HAP-1 (cell line): ENCODE measurements at regions of chr17 and their contacts with region 1.

Region 1: GRCh38 chr17:20300436-20300934 is 166.9 kb downstream of the LGALS9B start:
- DNase-seq: no peak
- H3K4me3 ChIP-seq: no peak overlapping the region
- H3K4me1 ChIP-seq: no peaks in the 10 kb centered on the region
- H3K27me3 ChIP-seq: no peaks in the 10 kb centered on the region

Region 2: GRCh38 chr17:19992803-19993713 is 307.4 kb before region 1 on chr17:
- in situ Hi-C with region 1: loop called (anchors 25 kb)
- DNase-seq: peak; percentile 91 to 93
- H3K4me3 ChIP-seq: peak overlapping the region; percentile 15; the same call in 1 of the 2 replicates
- H3K4me1 ChIP-seq: peaks cover 5% of the 10 kb centered on the region
- H3K27me3 ChIP-seq: no peaks in the 10 kb centered on the region

Region 3: GRCh38 chr17:20128036-20128667 is 172.3 kb before region 1 on chr17:
- in situ Hi-C with region 1: loop called (anchors 25 kb)
- DNase-seq: no peak
- H3K4me3 ChIP-seq: no peak overlapping the region
- H3K4me1 ChIP-seq: no peaks in the 10 kb centered on the region
- H3K27me3 ChIP-seq: no peaks in the 10 kb centered on the region

Region 4: DNA sequence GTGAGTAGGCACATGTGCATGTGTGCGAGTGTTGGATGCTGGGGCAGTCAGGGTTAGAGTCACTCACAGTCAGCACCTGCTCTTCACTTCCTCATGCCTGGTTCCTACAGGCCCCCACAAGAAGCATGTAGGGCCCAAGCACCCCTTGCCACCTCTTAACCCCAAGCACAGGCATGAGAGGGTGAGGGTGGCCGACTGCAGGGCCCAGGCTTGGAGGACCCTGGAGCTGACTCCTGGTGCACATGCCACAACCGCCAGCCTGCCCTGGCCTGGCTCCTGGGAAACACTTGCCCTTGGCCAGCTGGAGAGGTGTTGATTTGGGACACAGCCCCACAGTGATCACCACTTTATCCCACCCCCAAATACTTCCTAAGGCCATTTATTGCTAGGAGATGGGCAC is 262.1 kb after region 1 on chr17:
- in situ Hi-C with region 1: no loop called
- DNase-seq: no peak
- H3K4me3 ChIP-seq: no peak overlapping the region
- H3K4me1 ChIP-seq: no peaks in the 10 kb centered on the region
- H3K27me3 ChIP-seq: no peaks in the 10 kb centered on the region

Region 5: DNA sequence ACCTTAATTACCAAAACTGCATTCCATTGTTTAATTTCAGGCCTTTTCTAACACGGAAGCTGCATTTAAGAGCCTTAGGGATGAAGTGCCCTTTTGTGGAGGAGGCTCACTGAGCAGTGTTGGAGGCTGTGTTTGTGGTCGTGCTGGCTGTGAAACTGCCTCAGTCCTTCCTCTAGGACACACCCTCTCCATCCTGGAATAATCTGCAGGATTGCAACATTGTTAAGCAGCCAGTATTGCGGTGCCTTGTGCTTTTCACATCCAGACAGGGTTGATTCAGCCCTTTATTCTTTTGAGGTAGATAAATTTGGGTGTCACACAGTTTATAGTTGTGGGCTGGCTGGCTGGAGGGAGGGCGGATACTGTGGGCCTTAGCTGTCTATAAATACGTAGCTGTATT is 420.7 kb after region 1 on chr17:
- in situ Hi-C with region 1: no loop called
- DNase-seq: no peak
- H3K4me3 ChIP-seq: no peak overlapping the region
- H3K4me1 ChIP-seq: no peaks in the 10 kb centered on the region
- H3K27me3 ChIP-seq: no peaks in the 10 kb centered on the region